BJ (cell line): ENCODE measurements at regions of chr15 and their contacts with region 1.

Region 1: GRCh38 chr15:40217159-40217824 is 21.6 kb upstream of the PAK6 start:
- DNase-seq: no peak
- H3K4me3 ChIP-seq: no peak overlapping the region
- H3K27me3 ChIP-seq: no peaks in the 10 kb centered on the region
- CTCF ChIP-seq: peak; percentile 72

Region 2: GRCh38 chr15:40038638-40039543 is 178.4 kb before region 1 on chr15 and contains the start of gene SRP14:
- CTCF ChIA-PET with region 1: interaction called, 11 read pairs
- POLR2A ChIA-PET with region 1: no interaction called
- DNase-seq: peak; percentile 60
- H3K4me3 ChIP-seq: peak within 1 kb of the TSS; percentile 99
- H3K27me3 ChIP-seq: no peaks in the 10 kb centered on the region
- CTCF ChIP-seq: no peak
- polyA plus RNA-seq, gene SRP14: 305 and 564 TPM in 2 replicates

Region 3: GRCh38 chr15:40044717-40045571 is 172.3 kb before region 1 on chr15:
- CTCF ChIA-PET with region 1: interaction called, 14 read pairs
- POLR2A ChIA-PET with region 1: no interaction called
- DNase-seq: no peak
- H3K4me3 ChIP-seq: no peak overlapping the region
- H3K27me3 ChIP-seq: no peaks in the 10 kb centered on the region
- CTCF ChIP-seq: peak; percentile 97

Region 4: GRCh38 chr15:40204100-40204499 is 13.2 kb before region 1 on chr15:
- CTCF ChIA-PET with region 1: interaction called, 12 read pairs
- POLR2A ChIA-PET with region 1: no interaction called
- DNase-seq: no peak
- H3K4me3 ChIP-seq: no peak overlapping the region
- H3K27me3 ChIP-seq: no peaks in the 10 kb centered on the region
- CTCF ChIP-seq: no peak

Region 5: DNA sequence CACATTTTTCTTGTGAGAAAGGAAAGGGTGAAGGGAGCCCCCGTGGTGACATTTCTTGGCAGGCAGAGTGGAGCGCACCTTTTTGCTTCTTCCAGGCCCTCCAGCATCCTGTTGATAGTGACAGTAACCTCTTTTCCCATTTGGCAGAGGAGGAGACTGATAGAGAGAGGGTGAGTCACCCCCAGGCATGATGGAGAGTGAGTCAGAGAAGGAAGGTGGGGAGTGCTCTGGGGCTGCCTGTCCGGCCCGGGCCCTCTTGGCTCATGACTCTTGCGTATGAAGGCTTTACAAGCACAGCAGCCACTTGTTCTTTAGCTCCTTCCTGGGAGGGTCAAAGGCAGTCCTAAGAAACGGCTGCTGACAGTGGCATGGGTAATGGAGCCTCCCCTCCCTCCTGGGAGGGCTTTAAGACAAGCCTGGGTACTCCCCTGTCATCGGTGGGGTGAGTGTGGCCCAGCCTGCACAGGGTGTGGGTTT is 49.6 kb after region 1 on chr15:
- CTCF ChIA-PET with region 1: interaction called, 494 read pairs
- POLR2A ChIA-PET with region 1: no interaction called
- DNase-seq: peak; percentile 70
- H3K4me3 ChIP-seq: no peak overlapping the region
- H3K27me3 ChIP-seq: peaks cover 4% of the 10 kb centered on the region
- CTCF ChIP-seq: no peak